ENCODE measurements at regions of chr18 and their contacts with region 1.

Region 1: GRCh38 chr18:11980555-11981382 is 538 bp upstream of the IMPA2 start:
- DNase-seq: peak; percentile 94 to 95 (median 94)
- H3K4me3 ChIP-seq: peak overlapping the region; percentile 29 to 69
- H3K4me3 Mint-ChIP-seq: peak overlapping the region; percentile 81 to 93 (median 86)
- H3K27ac ChIP-seq: peak overlapping the region; percentile 9
- H3K27ac Mint-ChIP-seq: peak overlapping the region; percentile 25 to 79 (median 71)
- H3K4me1 ChIP-seq: peaks cover 12% of the 10 kb centered on the region
- H3K4me1 Mint-ChIP-seq: peaks cover 10 to 15% (median 12%) of the 10 kb centered on the region in 4 donors
- H3K27me3 ChIP-seq: no peaks in the 10 kb centered on the region
- H3K27me3 Mint-ChIP-seq: no peaks in the 10 kb centered on the region

Region 2: GRCh38 chr18:11470941-11471340 is 509.8 kb before region 1 on chr18:
- CTCF ChIA-PET with region 1: no interaction called
- POLR2A ChIA-PET with region 1: no interaction called
- intact Hi-C with region 1: no loop called
- DNase-seq: no peak
- H3K4me3 ChIP-seq: no peak overlapping the region
- H3K4me3 Mint-ChIP-seq: no peak overlapping the region
- H3K27ac ChIP-seq: no peak overlapping the region
- H3K27ac Mint-ChIP-seq: no peak overlapping the region
- H3K4me1 ChIP-seq: no peaks in the 10 kb centered on the region
- H3K4me1 Mint-ChIP-seq: no peaks in the 10 kb centered on the region
- H3K27me3 ChIP-seq: no peaks in the 10 kb centered on the region
- H3K27me3 Mint-ChIP-seq: peaks cover 0 to 1% of the 10 kb centered on the region in 2 donors

Region 3: GRCh38 chr18:11872479-11873136 is 108.2 kb before region 1 on chr18:
- CTCF ChIA-PET with region 1: no interaction called
- POLR2A ChIA-PET with region 1: no interaction called
- intact Hi-C with region 1: no loop called
- DNase-seq: peak in 2 of 5 donors; percentile 11 to 12
- H3K4me3 ChIP-seq: no peak overlapping the region
- H3K4me3 Mint-ChIP-seq: no peak overlapping the region
- H3K27ac ChIP-seq: no peak overlapping the region
- H3K27ac Mint-ChIP-seq: no peak overlapping the region
- H3K4me1 ChIP-seq: peaks cover 7% of the 10 kb centered on the region
- H3K4me1 Mint-ChIP-seq: peaks cover 0 to 4% (median 0%) of the 10 kb centered on the region in 4 donors
- H3K27me3 ChIP-seq: no peaks in the 10 kb centered on the region
- H3K27me3 Mint-ChIP-seq: peaks cover 0 to 4% of the 10 kb centered on the region in 2 donors

Region 4: GRCh38 chr18:11908182-11909060 is 72.3 kb before region 1 on chr18 and contains the start of gene MPPE1:
- CTCF ChIA-PET with region 1: no interaction called
- POLR2A ChIA-PET with region 1: interaction called, 23 read pairs
- intact Hi-C with region 1: loop called (anchors 1 kb)
- DNase-seq: peak; percentile 82 to 87 (median 83)
- H3K4me3 ChIP-seq: peak within 1 kb of the TSS; percentile 86 to 93
- H3K4me3 Mint-ChIP-seq: peak within 1 kb of the TSS; percentile 94 to 96 (median 96)
- H3K27ac ChIP-seq: peak within 1 kb of the TSS; percentile 93
- H3K27ac Mint-ChIP-seq: peak within 1 kb of the TSS; percentile 89 to 98 (median 96)
- H3K4me1 ChIP-seq: peaks cover 20% of the 10 kb centered on the region
- H3K4me1 Mint-ChIP-seq: peaks cover 11 to 37% (median 21%) of the 10 kb centered on the region in 4 donors
- H3K27me3 ChIP-seq: no peaks in the 10 kb centered on the region
- H3K27me3 Mint-ChIP-seq: no peaks in the 10 kb centered on the region
- total RNA-seq, gene MPPE1: 75.3 to 79.7 TPM

Region 5: GRCh38 chr18:11947214-11948191 is 33.3 kb before region 1 on chr18:
- CTCF ChIA-PET with region 1: interaction called, 665 read pairs
- POLR2A ChIA-PET with region 1: interaction called, 17 read pairs
- intact Hi-C with region 1: loop called (anchors 1 kb)
- DNase-seq: peak; percentile 40 to 73 (median 59)
- H3K4me3 ChIP-seq: peak overlapping the region in 1 of 2 donors; percentile 62
- H3K4me3 Mint-ChIP-seq: peak overlapping the region; percentile 83 to 95 (median 86)
- H3K27ac ChIP-seq: no peak overlapping the region
- H3K27ac Mint-ChIP-seq: peak overlapping the region; percentile 17 to 93 (median 88)
- H3K4me1 ChIP-seq: peaks cover 8% of the 10 kb centered on the region
- H3K4me1 Mint-ChIP-seq: peaks cover 6 to 18% (median 10%) of the 10 kb centered on the region in 4 donors
- H3K27me3 ChIP-seq: no peaks in the 10 kb centered on the region
- H3K27me3 Mint-ChIP-seq: no peaks in the 10 kb centered on the region

Measured in CD4-positive, alpha-beta memory T cell (primary cell).